Dendritic cell treated with granulocyte-macrophage colony-stimulating factor and Interleukin-4, amounts not matched to agents 40 ng/mL and 50 ng/mL, for 4 days (primary cell): ENCODE measurements at regions of chrX and their contacts with region 1.

Region 1: GRCh38 chrX:120499301-120500072 is 30.4 kb upstream of the LAMP2 start:
- H3K4me3 Mint-ChIP-seq: no peak overlapping the region
- H3K27ac Mint-ChIP-seq: no peak overlapping the region
- H3K4me1 Mint-ChIP-seq: peaks cover 12% of the 10 kb centered on the region
- H3K27me3 Mint-ChIP-seq: peaks cover 1% of the 10 kb centered on the region

Region 2: GRCh38 chrX:120302434-120302833 is 197.1 kb before region 1 on chrX:
- intact Hi-C with region 1: no loop called
- H3K4me3 Mint-ChIP-seq: no peak overlapping the region
- H3K27ac Mint-ChIP-seq: peak overlapping the region; percentile 67
- H3K4me1 Mint-ChIP-seq: peaks cover 43% of the 10 kb centered on the region
- H3K27me3 Mint-ChIP-seq: no peaks in the 10 kb centered on the region

Region 3: DNA sequence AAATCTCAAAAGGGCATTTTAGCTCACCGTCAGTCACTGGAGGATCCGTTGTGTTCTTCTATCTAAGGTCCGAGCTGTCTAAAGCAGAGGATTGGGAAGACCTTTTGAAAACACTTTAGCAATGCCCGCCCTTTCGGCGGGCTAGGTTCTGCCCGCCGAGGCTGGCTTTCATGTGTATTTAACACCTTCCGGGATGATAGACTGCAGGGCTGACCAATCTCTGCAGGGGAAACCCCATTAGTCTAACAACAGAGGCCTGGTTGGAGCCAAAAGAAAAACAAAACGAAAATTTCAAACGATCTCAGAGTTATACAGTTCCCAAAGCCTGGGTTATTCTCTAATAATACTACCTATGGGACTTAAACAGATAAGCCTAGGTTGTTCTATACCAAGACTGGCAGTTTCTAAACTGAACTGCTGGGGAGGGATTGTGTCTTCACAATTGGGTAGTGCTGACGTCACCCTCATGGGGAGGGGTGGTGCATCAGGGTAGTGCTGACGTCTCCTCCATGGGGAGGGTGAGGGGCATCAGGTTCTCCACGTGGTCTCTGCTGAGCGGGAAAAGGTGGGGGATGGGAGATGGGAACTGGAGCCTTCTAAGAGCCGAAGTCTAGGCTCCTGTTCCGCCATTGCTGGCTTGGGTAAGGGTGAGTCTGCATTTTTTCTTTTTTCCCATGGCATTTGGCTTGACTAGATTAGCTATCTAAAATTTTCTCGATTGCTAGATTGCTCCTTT is 76.1 kb after region 1 on chrX:
- intact Hi-C with region 1: no loop called
- H3K4me3 Mint-ChIP-seq: no peak overlapping the region
- H3K27ac Mint-ChIP-seq: no peak overlapping the region
- H3K4me1 Mint-ChIP-seq: peaks cover 6% of the 10 kb centered on the region
- H3K27me3 Mint-ChIP-seq: no peaks in the 10 kb centered on the region

Region 4: GRCh38 chrX:120664081-120664480 is 164.6 kb after region 1 on chrX:
- intact Hi-C with region 1: loop called (anchors 1 kb)
- H3K4me3 Mint-ChIP-seq: no peak overlapping the region
- H3K27ac Mint-ChIP-seq: no peak overlapping the region
- H3K4me1 Mint-ChIP-seq: no peaks in the 10 kb centered on the region
- H3K27me3 Mint-ChIP-seq: no peaks in the 10 kb centered on the region

Region 5: GRCh38 chrX:120769576-120770341 is 270.3 kb after region 1 on chrX:
- intact Hi-C with region 1: loop called (anchors 5 kb)
- H3K4me3 Mint-ChIP-seq: no peak overlapping the region
- H3K27ac Mint-ChIP-seq: no peak overlapping the region
- H3K4me1 Mint-ChIP-seq: no peaks in the 10 kb centered on the region
- H3K27me3 Mint-ChIP-seq: no peaks in the 10 kb centered on the region